ENCODE measurements at regions of chr20 and their contacts with region 1.

Region 1: DNA sequence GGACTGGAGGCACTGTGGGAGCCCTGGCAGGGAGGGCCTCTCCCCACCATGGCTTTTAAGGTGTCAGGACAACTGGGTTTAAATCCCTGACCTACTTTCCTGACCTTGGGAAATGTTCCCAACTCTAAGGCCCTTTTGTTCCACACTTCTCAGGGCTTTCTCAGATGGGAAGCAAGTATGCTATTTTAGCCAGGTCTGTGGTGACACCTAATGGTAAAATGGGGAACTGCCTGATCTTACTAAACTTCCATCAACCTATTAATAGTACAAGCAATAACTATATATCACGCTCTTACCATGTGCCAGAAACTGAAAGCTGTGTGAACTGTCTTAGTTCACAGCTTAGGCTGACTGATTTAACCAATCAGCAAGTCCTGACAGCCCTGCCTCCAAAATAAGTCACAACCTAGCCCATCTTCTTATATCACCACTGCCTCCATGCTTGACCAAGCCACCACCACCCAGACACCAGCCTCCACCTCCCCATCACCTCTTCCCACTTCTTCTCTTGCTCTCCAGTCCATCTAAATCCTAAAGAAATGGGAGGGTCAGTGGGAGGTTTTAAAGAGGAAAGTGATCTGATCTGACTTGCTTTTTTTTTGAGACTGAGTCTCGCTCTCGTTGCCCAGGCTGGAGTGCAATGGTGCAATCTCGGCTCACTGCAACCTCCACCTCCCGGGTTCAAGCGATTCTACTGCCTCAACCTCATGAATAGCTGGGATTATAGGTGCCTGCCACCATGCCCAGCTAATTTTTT is 6.9 kb upstream of the BLCAP start:
- DNase-seq: peak; percentile 40
- H3K4me3 Mint-ChIP-seq: no peak overlapping the region
- H3K27ac Mint-ChIP-seq: no peak overlapping the region
- H3K4me1 Mint-ChIP-seq: peaks cover 6% of the 10 kb centered on the region
- H3K27me3 Mint-ChIP-seq: peaks cover 11% of the 10 kb centered on the region

Region 2: GRCh38 chr20:37192137-37192854 is 342.3 kb before region 1 on chr20:
- intact Hi-C with region 1: loop called (anchors 1 kb)
- DNase-seq: peak; percentile 61
- H3K4me3 Mint-ChIP-seq: no peak overlapping the region
- H3K27ac Mint-ChIP-seq: peak overlapping the region; percentile 57
- H3K4me1 Mint-ChIP-seq: peaks cover 59% of the 10 kb centered on the region
- H3K27me3 Mint-ChIP-seq: no peaks in the 10 kb centered on the region

Region 3: DNA sequence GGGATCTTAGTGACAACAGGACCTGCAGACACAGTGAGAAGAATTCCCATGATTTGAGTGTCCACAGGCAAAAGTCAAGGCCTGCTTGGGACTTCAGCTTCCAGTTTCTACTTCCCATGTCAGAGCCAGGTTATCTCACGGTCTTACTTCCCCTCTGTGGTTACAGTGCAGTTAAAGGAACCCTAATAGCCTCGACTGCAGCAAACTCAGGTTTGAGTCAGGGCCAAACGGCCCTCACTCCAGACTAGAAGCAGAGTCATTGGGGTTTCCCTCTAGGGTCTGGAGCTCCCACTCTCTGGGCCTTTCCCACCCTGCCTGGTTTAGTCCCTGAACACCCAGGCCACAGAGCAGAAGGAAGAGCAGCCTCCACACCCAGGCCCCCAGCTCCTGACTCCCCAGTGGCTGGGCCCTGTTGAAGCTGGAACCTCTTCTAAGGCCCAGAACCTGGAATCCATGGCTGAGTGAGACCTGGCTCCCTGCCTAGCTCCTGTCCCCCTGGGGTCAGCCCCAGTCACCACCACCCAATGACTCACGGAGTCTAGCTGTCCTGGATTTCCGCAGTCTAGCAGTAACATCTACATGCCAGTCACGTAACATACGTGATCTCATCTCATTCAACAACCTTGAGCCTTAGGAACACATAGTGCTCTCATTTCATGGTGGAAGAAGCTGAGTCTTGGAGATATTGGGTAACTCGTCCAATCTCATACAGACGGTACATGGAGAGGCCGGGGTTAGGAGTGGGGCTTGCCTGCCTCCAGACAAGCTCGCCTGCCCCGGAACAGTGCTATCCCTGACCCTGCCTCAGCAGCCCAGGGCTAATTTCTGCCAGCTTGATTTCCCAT is 263.8 kb before region 1 on chr20:
- intact Hi-C with region 1: loop called (anchors 1 kb)
- DNase-seq: no peak
- H3K4me3 Mint-ChIP-seq: no peak overlapping the region
- H3K27ac Mint-ChIP-seq: no peak overlapping the region
- H3K4me1 Mint-ChIP-seq: no peaks in the 10 kb centered on the region
- H3K27me3 Mint-ChIP-seq: peaks cover 6% of the 10 kb centered on the region

Region 4: GRCh38 chr20:37392421-37393178 is 142.0 kb before region 1 on chr20:
- intact Hi-C with region 1: loop called (anchors 1 kb)
- DNase-seq: no peak
- H3K4me3 Mint-ChIP-seq: no peak overlapping the region
- H3K27ac Mint-ChIP-seq: no peak overlapping the region
- H3K4me1 Mint-ChIP-seq: no peaks in the 10 kb centered on the region
- H3K27me3 Mint-ChIP-seq: no peaks in the 10 kb centered on the region